Activated T-helper 1 cell treated with anti-CD3 and anti-CD28 coated beads, Interleukin-12 subunit alpha, Interleukin-12 subunit beta, Interleukin-2, Interleukin-4 antibody, amounts not matched to agents 30 ng/mL and 10 ng/mL and 1 ng/mL, durations not matched to agents 14 hours and 24 hours and 36 hours (primary cell): ENCODE measurements at regions of chr2 and their contacts with region 1.

Region 1: GRCh38 chr2:95022309-95023221 is 2.9 kb upstream of the MAL start:
- DNase-seq: peak; percentile 82
- H3K4me3 Mint-ChIP-seq: peak overlapping the region; percentile 73
- H3K27ac Mint-ChIP-seq: peak overlapping the region; percentile 85
- H3K4me1 Mint-ChIP-seq: peaks cover 41% of the 10 kb centered on the region
- H3K27me3 Mint-ChIP-seq: no peaks in the 10 kb centered on the region

Region 2: DNA sequence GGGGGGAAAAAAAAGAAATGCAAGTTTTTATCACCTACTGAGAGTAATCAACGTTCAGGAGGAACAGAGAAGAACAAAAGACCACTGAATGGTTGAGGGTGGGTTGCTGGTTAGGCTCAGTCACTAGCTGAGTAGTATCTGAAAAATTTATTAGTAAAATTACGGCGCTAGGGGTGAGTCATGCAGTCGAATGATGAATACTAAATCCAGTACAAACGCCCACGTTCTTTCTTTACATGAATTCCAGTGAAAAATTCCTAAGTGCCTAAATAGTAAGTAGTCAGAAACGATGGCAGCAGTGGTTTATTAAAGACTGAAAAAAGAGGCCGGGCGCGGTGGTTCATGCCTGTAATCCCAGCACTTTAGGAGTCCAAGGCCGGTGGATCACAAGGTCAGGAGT is 99.4 kb before region 1 on chr2:
- intact Hi-C with region 1: no loop called
- DNase-seq: no peak
- H3K4me3 Mint-ChIP-seq: no peak overlapping the region
- H3K27ac Mint-ChIP-seq: no peak overlapping the region
- H3K4me1 Mint-ChIP-seq: no peaks in the 10 kb centered on the region
- H3K27me3 Mint-ChIP-seq: no peaks in the 10 kb centered on the region

Region 3: DNA sequence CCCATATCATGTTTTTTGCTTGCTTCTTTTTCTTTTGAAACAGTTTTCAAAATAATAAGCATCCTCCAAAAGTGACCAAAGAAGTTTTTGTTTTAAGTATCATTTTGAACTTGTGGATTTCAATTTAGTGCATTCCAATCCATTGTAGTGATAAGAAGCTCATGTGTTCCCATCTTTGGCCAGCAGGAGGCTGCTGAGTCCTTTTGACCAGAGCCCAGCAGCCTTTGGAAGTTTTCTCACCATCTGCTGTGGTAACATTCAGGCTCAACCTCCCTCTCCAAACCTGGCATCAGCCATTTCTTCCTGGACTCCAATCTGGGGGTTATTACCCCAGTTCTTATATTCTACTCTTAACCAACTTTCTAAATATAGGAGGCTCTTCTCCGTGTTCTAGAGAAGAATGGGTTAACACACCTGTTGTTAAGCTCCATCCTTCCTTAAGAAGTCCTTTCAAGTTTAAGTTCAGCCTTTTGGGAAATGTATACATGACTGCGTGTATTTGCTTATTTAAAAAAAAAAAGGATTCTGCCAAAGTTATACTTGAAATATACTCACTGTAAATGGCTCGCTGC is 36.1 kb before region 1 on chr2:
- intact Hi-C with region 1: loop called (anchors 1 kb)
- DNase-seq: peak; percentile 9
- H3K4me3 Mint-ChIP-seq: no peak overlapping the region
- H3K27ac Mint-ChIP-seq: no peak overlapping the region
- H3K4me1 Mint-ChIP-seq: no peaks in the 10 kb centered on the region
- H3K27me3 Mint-ChIP-seq: peaks cover 10% of the 10 kb centered on the region

Region 4: DNA sequence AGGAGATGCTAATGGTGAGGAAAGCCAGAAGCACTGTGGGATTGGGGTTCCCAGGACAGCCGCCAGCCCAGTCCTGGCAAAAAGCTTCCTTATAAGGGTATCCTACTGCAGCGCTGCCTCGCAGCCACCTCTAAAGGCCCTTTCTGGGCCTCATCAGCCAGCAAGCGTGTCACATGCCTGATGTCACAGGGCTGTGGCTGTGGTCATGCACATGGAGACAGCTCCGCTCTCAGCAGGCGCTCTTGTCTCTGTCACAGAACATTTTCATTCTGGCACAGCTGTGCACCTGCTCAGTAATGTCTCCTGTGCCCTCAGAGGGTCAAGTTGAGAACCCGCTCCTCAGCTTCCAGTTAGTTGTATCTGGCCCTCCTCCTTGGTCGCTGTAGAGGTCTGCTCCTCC is 14.7 kb before region 1 on chr2:
- intact Hi-C with region 1: no loop called
- DNase-seq: no peak
- H3K4me3 Mint-ChIP-seq: no peak overlapping the region
- H3K27ac Mint-ChIP-seq: no peak overlapping the region
- H3K4me1 Mint-ChIP-seq: peaks cover 4% of the 10 kb centered on the region
- H3K27me3 Mint-ChIP-seq: peaks cover 4% of the 10 kb centered on the region

Region 5: GRCh38 chr2:95050427-95050861 is 27.9 kb after region 1 on chr2:
- intact Hi-C with region 1: loop called (anchors 1 kb)
- DNase-seq: no peak
- H3K4me3 Mint-ChIP-seq: peak overlapping the region; percentile 59
- H3K27ac Mint-ChIP-seq: peak overlapping the region; percentile 97
- H3K4me1 Mint-ChIP-seq: peaks cover 84% of the 10 kb centered on the region
- H3K27me3 Mint-ChIP-seq: no peaks in the 10 kb centered on the region

Region 6: GRCh38 chr2:95159690-95160449 is 137.3 kb after region 1 on chr2 and contains the start of gene ZNF514:
- intact Hi-C with region 1: loop called (anchors 2 kb)
- DNase-seq: peak; percentile 80
- H3K4me3 Mint-ChIP-seq: peak within 1 kb of the TSS; percentile 90
- H3K27ac Mint-ChIP-seq: peak within 1 kb of the TSS; percentile 91
- H3K4me1 Mint-ChIP-seq: peaks cover 39% of the 10 kb centered on the region
- H3K27me3 Mint-ChIP-seq: no peaks in the 10 kb centered on the region
- total RNA-seq, gene ZNF514: 9.9 and 10.1 TPM in 2 replicates

Region 7: DNA sequence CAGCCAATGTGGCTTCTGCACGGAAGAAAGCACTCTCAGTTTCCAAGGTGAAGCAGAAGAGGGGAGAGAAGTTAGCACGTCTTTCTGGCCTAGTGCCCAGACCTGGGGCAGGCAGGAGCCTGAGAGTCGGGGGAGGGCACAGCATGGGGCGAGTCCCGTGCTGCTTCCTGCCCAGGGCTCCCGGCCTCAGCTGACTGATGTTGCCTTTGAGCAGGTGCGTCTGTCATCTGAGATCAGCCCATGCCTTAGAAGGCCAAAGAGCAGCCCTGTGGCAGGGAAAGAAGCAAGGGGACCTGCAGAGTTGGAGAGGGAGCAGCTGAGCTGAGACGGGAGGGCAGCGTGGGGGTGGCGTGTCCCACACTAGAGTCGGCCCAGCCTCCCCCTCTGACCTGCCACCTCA is 277.9 kb after region 1 on chr2:
- intact Hi-C with region 1: no loop called
- DNase-seq: no peak
- H3K4me3 Mint-ChIP-seq: no peak overlapping the region
- H3K27ac Mint-ChIP-seq: no peak overlapping the region
- H3K4me1 Mint-ChIP-seq: no peaks in the 10 kb centered on the region
- H3K27me3 Mint-ChIP-seq: peaks cover 3% of the 10 kb centered on the region

Region 8: DNA sequence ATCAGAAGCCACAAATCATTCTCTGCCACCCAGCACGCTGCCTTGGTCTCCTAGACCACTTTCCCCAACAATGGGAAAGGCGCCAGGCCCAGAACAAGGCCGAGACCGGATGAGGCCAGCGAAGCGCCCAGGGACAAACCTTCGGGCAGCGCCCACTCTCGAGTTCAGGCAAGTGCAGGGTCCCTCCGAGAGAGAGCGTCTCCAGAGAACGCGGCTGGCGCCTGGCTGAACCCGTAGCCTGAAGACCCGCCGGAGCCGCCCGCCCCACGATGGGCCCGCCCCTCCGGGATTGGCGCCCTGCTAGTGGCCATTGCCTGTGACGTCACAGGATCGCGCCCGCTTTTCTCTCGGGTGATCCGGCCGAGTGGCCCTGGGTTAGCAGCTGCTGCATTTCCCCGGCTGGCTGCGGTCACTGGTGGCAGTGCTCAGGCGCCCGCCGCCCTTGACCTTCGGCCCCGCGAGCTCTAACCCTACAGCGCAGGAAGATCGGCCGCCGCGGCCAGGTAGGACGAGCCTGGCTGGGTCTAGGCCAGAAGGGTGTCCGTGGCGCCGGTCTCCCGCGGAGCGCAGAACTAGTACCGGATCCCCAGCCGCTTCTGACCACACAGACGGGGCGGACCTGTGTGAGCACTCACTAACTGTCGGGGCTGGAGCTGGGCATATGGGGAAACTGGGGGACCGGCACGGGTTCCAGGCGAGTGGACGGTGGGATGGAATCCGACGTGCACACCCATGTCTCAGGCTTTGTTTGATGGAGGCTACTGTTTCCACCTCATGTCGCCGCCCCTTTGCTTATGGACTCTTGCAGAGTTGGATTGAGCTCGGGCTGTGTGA is 380.0 kb after region 1 on chr2 and contains the start of gene FAHD2A:
- intact Hi-C with region 1: loop called (anchors 2 kb)
- DNase-seq: peak; percentile 95
- H3K4me3 Mint-ChIP-seq: peak within 1 kb of the TSS; percentile 99
- H3K27ac Mint-ChIP-seq: peak within 1 kb of the TSS; percentile 96
- H3K4me1 Mint-ChIP-seq: peaks cover 22% of the 10 kb centered on the region
- H3K27me3 Mint-ChIP-seq: no peaks in the 10 kb centered on the region
- total RNA-seq, gene FAHD2A: 33.2 and 34.9 TPM in 2 replicates